ENCODE measurements at regions of chr16 and their contacts with region 1.

Region 1: DNA sequence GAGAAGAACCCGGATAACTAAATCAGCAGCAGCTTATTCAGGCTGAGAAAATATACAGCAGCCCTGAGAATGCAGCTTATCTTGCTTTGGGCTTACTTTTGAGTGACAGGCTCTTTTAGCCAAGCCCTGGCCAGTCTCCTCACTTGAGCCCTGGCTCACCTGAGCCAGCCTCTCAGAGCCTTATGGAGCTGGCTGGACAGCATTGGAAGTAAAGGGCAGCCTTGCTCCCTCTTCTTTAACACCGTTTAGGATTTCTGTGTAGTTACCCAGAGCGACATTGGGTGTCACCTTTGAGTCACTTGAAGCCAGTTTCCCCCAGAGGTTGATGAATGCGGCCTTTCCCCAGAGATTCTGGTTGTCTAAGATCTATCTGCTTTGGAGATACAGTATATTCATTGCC is 7.7 kb upstream of the NPIPB2 start:
- DNase-seq: no peak
- ATAC-seq: peak; percentile 99
- H3K4me3 Mint-ChIP-seq: no peak overlapping the region
- H3K27ac Mint-ChIP-seq: no peak overlapping the region
- H3K4me1 Mint-ChIP-seq: peaks cover 14% of the 10 kb centered on the region
- H3K27me3 Mint-ChIP-seq: no peaks in the 10 kb centered on the region
- CTCF ChIP-seq: peak; percentile 38

Region 2: GRCh38 chr16:11114366-11115164 is 835.0 kb before region 1 on chr16:
- CTCF ChIA-PET with region 1: no interaction called
- POLR2A ChIA-PET with region 1: no interaction called
- intact Hi-C with region 1: no loop called
- DNase-seq: no peak
- ATAC-seq: no peak
- H3K4me3 Mint-ChIP-seq: no peak overlapping the region
- H3K27ac Mint-ChIP-seq: peak overlapping the region; percentile 9
- H3K4me1 Mint-ChIP-seq: peaks cover 10% of the 10 kb centered on the region
- H3K27me3 Mint-ChIP-seq: no peaks in the 10 kb centered on the region
- CTCF ChIP-seq: no peak

Region 3: GRCh38 chr16:11915644-11916523 is 33.6 kb before region 1 on chr16 and contains the start of gene GSPT1:
- CTCF ChIA-PET with region 1: no interaction called
- POLR2A ChIA-PET with region 1: no interaction called
- intact Hi-C with region 1: no loop called
- DNase-seq: peak; percentile 98
- ATAC-seq: peak; percentile 93
- H3K4me3 Mint-ChIP-seq: peak within 1 kb of the TSS; percentile 89
- H3K27ac Mint-ChIP-seq: peak within 1 kb of the TSS; percentile 89
- H3K4me1 Mint-ChIP-seq: peaks cover 31% of the 10 kb centered on the region
- H3K27me3 Mint-ChIP-seq: peaks cover 4% of the 10 kb centered on the region
- CTCF ChIP-seq: no peak
- total RNA-seq, gene GSPT1: 99.9 and 101 TPM in 2 replicates

Region 4: DNA sequence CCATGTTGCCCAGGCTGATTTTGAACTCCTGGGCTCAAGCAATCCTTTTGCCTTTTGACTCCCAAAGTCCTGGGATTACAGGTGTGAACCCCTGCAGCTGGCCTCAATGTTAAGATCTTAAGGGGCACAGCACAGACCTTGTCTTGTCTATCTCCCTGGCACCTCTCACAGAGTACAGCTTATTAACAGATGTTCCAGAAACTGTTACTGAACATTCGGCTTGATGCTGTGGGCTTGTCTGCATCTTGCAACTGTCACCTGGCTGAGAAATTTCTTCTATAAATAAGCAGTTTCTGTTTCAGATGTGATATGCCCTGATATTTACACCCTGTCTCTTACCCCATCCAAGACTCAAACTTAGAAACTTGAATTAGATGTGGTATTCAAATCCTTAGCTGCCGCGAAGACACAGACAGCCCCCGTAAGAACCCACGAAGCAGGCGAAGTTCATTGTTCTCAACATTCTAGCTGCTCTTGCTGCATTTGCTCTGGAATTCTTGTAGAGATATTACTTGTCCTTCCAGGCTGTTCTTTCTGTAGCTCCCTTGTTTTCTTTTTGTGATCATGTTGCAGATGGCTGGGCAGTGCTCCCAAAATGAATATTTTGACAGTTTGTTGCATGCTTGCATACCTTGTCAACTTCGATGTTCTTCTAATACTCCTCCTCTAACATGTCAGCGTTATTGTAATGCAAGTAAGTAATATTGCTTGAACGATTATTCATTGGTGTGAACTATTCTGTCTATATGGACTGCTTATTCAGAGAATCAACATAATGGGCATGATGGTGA is 15.4 kb after region 1 on chr16 and contains the start of gene TNFRSF17:
- CTCF ChIA-PET with region 1: interaction called, 8 read pairs
- POLR2A ChIA-PET with region 1: interaction called, 3 read pairs
- intact Hi-C with region 1: loop called (anchors 1 kb)
- DNase-seq: no peak
- ATAC-seq: peak; percentile 64
- H3K4me3 Mint-ChIP-seq: peak within 1 kb of the TSS; percentile 80
- H3K27ac Mint-ChIP-seq: peak within 1 kb of the TSS; percentile 90
- H3K4me1 Mint-ChIP-seq: peaks cover 72% of the 10 kb centered on the region
- H3K27me3 Mint-ChIP-seq: no peaks in the 10 kb centered on the region
- CTCF ChIP-seq: no peak
- total RNA-seq, gene TNFRSF17: 6.9 and 8.0 TPM in 2 replicates

Region 5: GRCh38 chr16:11994143-11995119 is 44.9 kb after region 1 on chr16:
- CTCF ChIA-PET with region 1: interaction called, 3 read pairs
- POLR2A ChIA-PET with region 1: interaction called, 5 read pairs
- intact Hi-C with region 1: loop called (anchors 1 kb)
- DNase-seq: no peak
- ATAC-seq: peak; percentile 61
- H3K4me3 Mint-ChIP-seq: peak overlapping the region; percentile 15
- H3K27ac Mint-ChIP-seq: peak overlapping the region; percentile 50
- H3K4me1 Mint-ChIP-seq: peaks cover 79% of the 10 kb centered on the region
- H3K27me3 Mint-ChIP-seq: no peaks in the 10 kb centered on the region
- CTCF ChIP-seq: no peak